AG04449 (cell line): ENCODE measurements at regions of chr3 and their contacts with region 1.

Region 1: GRCh38 chr3:189967254-189967865 is 153.3 kb downstream of the P3H2 start:
- DNase-seq: no peak
- H3K4me3 ChIP-seq: no peak overlapping the region
- CTCF ChIP-seq: peak; percentile 57

Region 2: DNA sequence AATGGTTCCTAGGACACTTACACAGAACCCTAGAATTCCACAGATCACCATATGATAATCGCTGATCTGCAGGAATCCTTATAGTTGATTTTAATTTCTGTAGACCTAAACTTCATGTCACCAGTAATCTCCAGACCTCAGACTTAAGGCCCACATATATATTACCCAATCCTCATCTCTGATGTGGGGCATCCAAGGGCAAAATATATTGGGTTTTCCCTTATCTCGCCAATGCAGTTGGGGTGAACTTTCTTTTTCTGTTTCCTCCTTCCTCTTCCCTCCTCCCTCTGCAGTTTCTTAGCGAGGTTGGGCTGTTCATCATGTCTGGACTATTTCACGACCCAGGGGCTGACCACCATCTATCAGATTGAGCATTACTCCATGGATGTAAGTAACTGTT is 76.9 kb before region 1 on chr3:
- CTCF ChIA-PET with region 1: no interaction called
- POLR2A ChIA-PET with region 1: no interaction called
- DNase-seq: no peak
- H3K4me3 ChIP-seq: no peak overlapping the region
- CTCF ChIP-seq: no peak

Region 3: GRCh38 chr3:189981668-189982067 is 14.3 kb after region 1 on chr3:
- CTCF ChIA-PET with region 1: interaction called, 62 read pairs
- POLR2A ChIA-PET with region 1: no interaction called
- DNase-seq: peak; percentile 93
- H3K4me3 ChIP-seq: no peak overlapping the region
- CTCF ChIP-seq: no peak

Region 4: DNA sequence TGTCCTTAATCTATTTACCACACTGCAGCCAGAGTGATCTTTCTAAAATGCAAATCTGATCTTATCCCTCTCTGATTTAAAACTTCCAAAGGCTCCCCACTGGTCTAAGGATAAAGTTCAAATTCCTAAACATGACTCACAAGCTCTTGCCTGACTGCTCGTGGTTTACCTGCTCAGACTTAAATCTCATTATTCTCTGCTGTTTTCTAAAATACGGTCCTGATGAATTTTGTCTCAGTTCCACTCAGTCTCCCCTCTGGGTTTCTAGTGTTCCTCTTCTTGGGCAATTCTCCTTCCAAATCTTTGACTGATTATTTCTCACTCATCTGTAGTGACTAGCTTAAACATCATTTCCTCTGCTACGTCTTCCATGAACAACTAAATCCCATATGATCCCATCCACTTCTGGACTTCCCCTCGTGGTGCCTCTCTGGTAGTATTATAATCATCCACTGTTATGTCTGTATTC is 45.0 kb after region 1 on chr3:
- CTCF ChIA-PET with region 1: interaction called, 17 read pairs
- POLR2A ChIA-PET with region 1: no interaction called
- DNase-seq: no peak
- H3K4me3 ChIP-seq: no peak overlapping the region
- CTCF ChIP-seq: no peak

Region 5: DNA sequence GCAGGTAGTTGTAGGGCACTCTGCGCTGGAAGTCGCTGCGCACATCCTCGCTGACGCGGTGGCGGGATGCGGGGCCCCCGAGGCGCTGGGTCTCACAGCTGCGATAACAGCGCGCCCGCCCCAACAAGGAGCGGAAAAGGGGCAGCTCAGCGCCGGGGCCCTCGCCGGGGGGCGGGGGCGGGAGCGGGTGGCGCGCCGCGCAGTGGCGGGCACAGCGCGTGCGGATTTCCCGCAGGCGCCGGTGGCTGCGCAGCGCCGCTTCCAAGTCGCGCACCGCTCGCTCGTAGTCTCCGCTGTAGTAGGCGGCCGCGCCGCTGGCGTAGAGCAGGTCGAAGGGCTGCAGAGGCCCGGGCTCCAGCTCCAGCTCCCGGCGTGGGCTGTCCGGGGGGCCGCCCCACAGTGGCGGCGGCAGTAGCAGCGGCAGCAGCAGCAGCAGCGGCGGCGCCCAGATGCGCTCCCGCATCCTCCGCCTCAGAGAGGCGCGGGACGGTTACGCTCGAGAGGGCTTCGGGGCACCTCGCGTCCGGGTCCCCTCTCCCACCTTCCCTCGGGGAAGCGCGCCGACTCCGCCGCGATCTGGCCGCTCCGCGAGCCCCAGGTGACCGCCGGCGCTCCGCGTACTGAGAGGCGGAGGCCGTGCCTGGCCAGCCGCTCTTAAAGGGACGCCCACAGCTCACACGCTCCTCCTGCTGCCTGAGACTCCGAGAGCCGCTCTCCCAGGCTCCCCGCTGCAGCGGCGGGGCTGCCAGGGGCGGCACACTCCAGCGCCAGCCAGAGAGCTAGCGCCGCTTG is 153.1 kb after region 1 on chr3 and contains the start of gene P3H2:
- CTCF ChIA-PET with region 1: interaction called, 13 read pairs
- POLR2A ChIA-PET with region 1: no interaction called
- DNase-seq: no peak
- H3K4me3 ChIP-seq: peak within 1 kb of the TSS; percentile 78
- CTCF ChIP-seq: peak; percentile 77

Region 6: GRCh38 chr3:190217081-190217480 is 249.7 kb after region 1 on chr3:
- CTCF ChIA-PET with region 1: interaction called, 14 read pairs
- POLR2A ChIA-PET with region 1: no interaction called
- DNase-seq: no peak
- H3K4me3 ChIP-seq: no peak overlapping the region
- CTCF ChIP-seq: no peak

Region 7: DNA sequence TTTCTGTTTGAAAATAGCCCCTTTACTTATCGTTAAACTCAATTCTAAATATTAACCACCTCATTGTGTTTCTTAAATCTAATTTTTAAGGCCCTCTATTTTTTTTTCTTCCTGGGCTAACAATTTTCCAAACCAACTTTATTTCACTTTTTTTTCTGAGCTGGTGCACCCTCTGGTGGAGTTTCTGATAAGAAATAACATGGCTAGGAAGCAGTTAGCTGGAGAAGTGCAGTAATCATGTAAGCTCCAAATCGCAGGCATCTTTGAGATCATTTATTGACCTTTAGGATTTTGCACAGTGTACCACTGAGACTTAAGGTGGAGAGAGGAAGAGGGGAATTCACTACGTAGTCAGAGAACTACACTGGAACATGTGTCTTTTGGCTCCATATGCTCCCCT is 475.9 kb after region 1 on chr3:
- CTCF ChIA-PET with region 1: interaction called, 43 read pairs
- POLR2A ChIA-PET with region 1: no interaction called
- DNase-seq: no peak
- H3K4me3 ChIP-seq: no peak overlapping the region
- CTCF ChIP-seq: peak; percentile 32